Activated CD8-positive, alpha-beta T cell treated with anti-CD3 and anti-CD28 coated beads, Interleukin-2, amount 10 ng/mL, durations not matched to agents 7 days and 5 days (primary cell): ENCODE measurements at regions of chr10 and their contacts with region 1.

Region 1: GRCh38 chr10:97400665-97401454 is at the start of gene RRP12:
- DNase-seq: peak; percentile 95
- ATAC-seq: peak; percentile 87
- H3K4me3 Mint-ChIP-seq: peak within 1 kb of the TSS; percentile 95
- H3K27ac Mint-ChIP-seq: peak within 1 kb of the TSS; percentile 96
- H3K4me1 Mint-ChIP-seq: peaks cover 19% of the 10 kb centered on the region
- H3K27me3 Mint-ChIP-seq: no peaks in the 10 kb centered on the region
- total RNA-seq, gene RRP12: 30.9 to 35.6 TPM

Region 2: GRCh38 chr10:97412891-97413304 is 12.0 kb after region 1 on chr10:
- CTCF ChIA-PET with region 1: interaction called, 39 read pairs
- POLR2A ChIA-PET with region 1: interaction called, 10 read pairs
- DNase-seq: peak; percentile 58
- ATAC-seq: peak; percentile 6
- H3K4me3 Mint-ChIP-seq: peak overlapping the region; percentile 18
- H3K27ac Mint-ChIP-seq: peak overlapping the region; percentile 84
- H3K4me1 Mint-ChIP-seq: peaks cover 57% of the 10 kb centered on the region
- H3K27me3 Mint-ChIP-seq: no peaks in the 10 kb centered on the region